Thyroid gland (tissue), 4 donors: ENCODE measurements at regions of chr1 and their contacts with region 1.

Region 1: GRCh38 chr1:23344111-23344986 is at the start of gene HNRNPR:
- DNase-seq: peak; percentile 100
- H3K4me3 ChIP-seq: peak within 1 kb of the TSS; percentile 49 to 95 (median 78)
- H3K27ac ChIP-seq: peak within 1 kb of the TSS; percentile 89 to 99 (median 96)
- H3K4me1 ChIP-seq: peaks cover 28 to 34% of the 10 kb centered on the region in 2 donors
- H3K27me3 ChIP-seq: no peaks in the 10 kb centered on the region
- CTCF ChIP-seq: no peak
- POLR2A ChIP-seq: peak; percentile 74 to 83
- total RNA-seq, gene HNRNPR: 82.8 to 107 (median 99.4) TPM

Region 2: DNA sequence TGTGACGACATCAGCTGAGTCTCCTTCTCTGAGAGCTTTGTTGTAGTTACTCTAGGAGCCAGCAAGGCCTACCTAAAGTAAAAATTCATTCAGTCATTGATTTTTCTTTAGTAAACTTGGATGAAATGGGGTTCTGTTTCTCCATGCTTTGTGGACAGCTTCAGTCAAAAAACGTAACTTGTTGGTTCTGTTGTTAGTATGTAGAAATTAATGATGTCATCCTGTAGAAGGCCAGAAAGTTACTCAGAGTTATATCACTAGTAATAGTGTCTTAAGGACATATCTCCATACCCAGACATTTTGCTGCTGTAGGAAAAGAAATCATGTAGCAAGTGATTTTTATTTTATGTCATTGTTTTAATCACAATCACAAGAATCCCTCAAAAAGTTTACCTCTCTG is 282.1 kb before region 1 on chr1:
- intact Hi-C with region 1: no loop called
- DNase-seq: no peak
- H3K4me3 ChIP-seq: no peak overlapping the region
- H3K27ac ChIP-seq: no peak overlapping the region
- H3K4me1 ChIP-seq: no peaks in the 10 kb centered on the region
- H3K27me3 ChIP-seq: no peaks in the 10 kb centered on the region
- CTCF ChIP-seq: no peak
- POLR2A ChIP-seq: no peak

Region 3: DNA sequence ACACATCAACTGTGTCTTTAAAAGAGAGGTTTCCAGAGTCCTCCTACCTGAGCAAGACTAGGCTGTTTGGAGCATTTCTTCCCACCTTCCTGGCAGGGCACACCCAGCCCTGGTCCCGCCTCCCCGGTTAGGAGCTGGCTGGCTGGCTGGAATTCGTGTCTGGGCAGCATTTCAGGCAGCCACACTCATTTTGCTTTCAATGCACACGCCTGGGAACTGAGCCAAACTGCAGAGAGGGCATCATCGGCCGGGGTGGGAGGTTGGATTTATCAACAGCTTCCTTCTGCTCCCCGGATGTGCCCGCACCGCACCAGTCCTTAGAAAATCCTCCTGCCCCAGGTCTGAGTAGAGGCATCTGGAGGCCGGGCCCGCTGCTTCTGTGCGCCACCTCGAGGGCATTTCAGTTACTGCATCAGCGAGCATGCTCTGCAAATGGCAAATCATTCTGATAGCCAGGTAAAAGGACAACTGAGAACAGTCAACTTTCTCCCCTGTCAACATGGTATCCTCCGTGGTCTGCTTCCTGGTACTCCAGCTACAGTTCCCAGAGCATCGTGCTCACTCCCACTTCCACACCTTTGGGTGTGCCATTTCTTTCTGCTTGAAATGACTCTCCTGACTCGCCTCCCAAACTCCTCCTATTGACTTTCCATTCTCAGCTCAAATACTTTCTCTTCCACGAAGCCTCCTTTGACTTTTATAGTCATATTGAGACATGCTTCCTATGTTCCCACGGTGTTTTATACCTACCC is 59.6 kb after region 1 on chr1:
- intact Hi-C with region 1: loop called (anchors 10 kb)
- DNase-seq: peak; percentile 99
- H3K4me3 ChIP-seq: no peak overlapping the region
- H3K27ac ChIP-seq: peak overlapping the region; percentile 19 to 69 (median 69)
- H3K4me1 ChIP-seq: peaks cover 5 to 28% of the 10 kb centered on the region in 2 donors
- H3K27me3 ChIP-seq: no peaks in the 10 kb centered on the region
- CTCF ChIP-seq: peak; percentile 83 to 98 (median 97)
- POLR2A ChIP-seq: peak in 1 of 2 donors; percentile 48

Region 4: DNA sequence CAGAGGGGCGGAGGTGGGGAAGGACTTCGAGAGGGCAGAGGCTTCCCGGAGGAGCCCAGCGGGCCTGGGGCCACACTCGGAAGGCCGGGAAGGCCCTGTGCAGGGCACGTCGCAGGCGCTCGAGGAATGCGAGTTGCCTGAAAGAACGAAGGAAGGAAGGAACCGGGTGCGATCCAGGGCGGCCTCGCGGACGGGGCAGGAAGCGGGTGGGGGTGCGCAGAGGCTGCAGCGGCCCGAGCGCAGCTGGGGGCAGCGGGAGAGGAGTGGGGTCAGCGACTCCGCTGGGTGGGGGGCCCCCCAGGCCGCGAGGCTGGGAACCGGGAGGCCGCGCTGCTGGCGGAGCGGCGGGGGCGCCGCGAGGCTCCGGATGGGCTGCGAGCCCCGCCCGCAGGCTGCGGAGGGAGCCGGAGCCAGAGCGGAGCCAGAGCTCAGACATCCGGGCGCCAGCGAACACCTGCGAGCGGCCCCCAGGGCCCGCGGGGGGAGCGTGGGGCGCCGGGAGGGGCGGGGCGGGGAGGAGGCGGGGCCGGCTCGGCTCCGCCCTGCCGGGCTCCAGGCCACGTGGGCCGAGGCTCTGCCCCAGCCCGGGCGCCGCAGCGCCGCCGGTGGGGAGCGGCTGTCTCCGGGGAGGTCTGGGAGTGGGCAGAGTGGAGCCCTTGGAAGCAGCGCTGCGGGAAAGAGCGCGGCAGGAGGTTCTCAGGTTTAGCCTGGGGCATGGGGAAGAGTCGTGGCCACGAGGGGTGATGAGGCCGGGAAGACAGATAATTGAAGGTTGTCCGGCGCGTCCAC is 210.3 kb after region 1 on chr1:
- intact Hi-C with region 1: no loop called
- DNase-seq: peak; percentile 92
- H3K4me3 ChIP-seq: peak overlapping the region in 1 of 3 donors; percentile 41
- H3K27ac ChIP-seq: peak overlapping the region; percentile 99
- H3K4me1 ChIP-seq: peaks cover 41 to 47% of the 10 kb centered on the region in 2 donors
- H3K27me3 ChIP-seq: no peaks in the 10 kb centered on the region
- CTCF ChIP-seq: peak in 1 of 6 experiments; percentile 32
- POLR2A ChIP-seq: peak; percentile 91 to 98